ENCODE measurements at regions of chr1 and their contacts with region 1.

Region 1: GRCh38 chr1:32448773-32449456 is 16.0 kb upstream of the ZBTB8B start:
- DNase-seq: peak; percentile 38 to 51
- H3K4me3 ChIP-seq: no peak overlapping the region
- H3K4me3 Mint-ChIP-seq: no peak overlapping the region
- H3K27ac Mint-ChIP-seq: no peak overlapping the region
- H3K4me1 ChIP-seq: no peaks in the 10 kb centered on the region
- H3K4me1 Mint-ChIP-seq: peaks cover 5% of the 10 kb centered on the region
- H3K27me3 ChIP-seq: no peaks in the 10 kb centered on the region
- H3K27me3 Mint-ChIP-seq: peaks cover 5% of the 10 kb centered on the region
- CTCF ChIP-seq: no peak

Region 2: DNA sequence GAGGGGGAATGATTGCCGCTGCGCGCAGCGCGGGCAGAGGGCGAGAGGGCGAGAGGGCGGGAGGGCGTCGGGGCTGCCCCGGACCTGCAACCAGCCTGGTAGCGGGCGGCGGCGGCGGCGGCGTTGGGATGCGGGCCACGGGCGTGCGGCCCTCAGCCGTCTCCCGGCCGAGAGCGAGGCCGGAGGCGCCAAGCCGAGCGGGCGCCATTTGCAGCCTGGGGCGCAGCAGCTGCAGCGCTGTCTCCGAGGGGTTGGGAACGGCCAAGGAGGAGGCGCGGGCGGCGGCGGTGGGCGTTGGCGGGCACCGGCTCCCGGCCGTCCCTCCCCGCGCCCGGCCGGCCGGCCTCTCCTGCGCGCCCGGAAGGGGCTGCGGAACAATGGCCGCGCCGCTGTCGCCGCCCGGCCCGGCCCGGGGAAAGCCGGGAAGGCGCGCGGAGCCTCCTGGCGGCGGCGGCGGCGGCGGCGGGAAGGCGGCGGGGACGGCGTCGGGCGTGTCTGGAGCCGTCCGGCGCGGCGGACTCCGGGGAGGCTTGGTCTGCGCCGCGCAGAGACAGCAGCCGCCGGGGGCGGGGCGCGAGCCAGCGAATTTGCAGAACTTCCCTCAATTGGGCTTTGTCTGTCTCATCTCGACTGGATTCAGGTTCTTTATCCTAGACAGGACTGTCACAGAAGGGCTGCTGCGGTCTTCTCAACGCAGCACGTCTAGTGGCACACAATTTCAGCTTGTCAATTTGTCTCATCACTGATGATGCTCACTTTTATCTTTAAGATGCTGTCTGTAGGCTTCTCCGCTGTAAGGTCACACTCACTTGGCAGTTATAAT is 51.7 kb after region 1 on chr1:
- CTCF ChIA-PET with region 1: interaction called, 3 read pairs
- POLR2A ChIA-PET with region 1: no interaction called
- intact Hi-C with region 1: loop called (anchors 5 kb)
- DNase-seq: peak; percentile 38 to 73
- H3K4me3 ChIP-seq: peak overlapping the region; percentile 50
- H3K4me3 Mint-ChIP-seq: peak overlapping the region; percentile 77
- H3K27ac Mint-ChIP-seq: peak overlapping the region; percentile 92
- H3K4me1 ChIP-seq: no peaks in the 10 kb centered on the region
- H3K4me1 Mint-ChIP-seq: no peaks in the 10 kb centered on the region
- H3K27me3 ChIP-seq: no peaks in the 10 kb centered on the region
- H3K27me3 Mint-ChIP-seq: no peaks in the 10 kb centered on the region
- CTCF ChIP-seq: no peak